Activated CD8-positive, alpha-beta T cell treated with anti-CD3 and anti-CD28 coated beads for 36 hours (primary cell): ENCODE measurements at regions of chr1 and their contacts with region 1.

Region 1: GRCh38 chr1:182855911-182856310 is 16.8 kb downstream of the DHX9 start:
- DNase-seq: no peak
- ATAC-seq: no peak
- H3K4me3 Mint-ChIP-seq: no peak overlapping the region
- H3K27ac Mint-ChIP-seq: no peak overlapping the region
- H3K4me1 Mint-ChIP-seq: peaks cover 26% of the 10 kb centered on the region
- H3K27me3 Mint-ChIP-seq: no peaks in the 10 kb centered on the region
- CTCF ChIP-seq: no peak

Region 2: DNA sequence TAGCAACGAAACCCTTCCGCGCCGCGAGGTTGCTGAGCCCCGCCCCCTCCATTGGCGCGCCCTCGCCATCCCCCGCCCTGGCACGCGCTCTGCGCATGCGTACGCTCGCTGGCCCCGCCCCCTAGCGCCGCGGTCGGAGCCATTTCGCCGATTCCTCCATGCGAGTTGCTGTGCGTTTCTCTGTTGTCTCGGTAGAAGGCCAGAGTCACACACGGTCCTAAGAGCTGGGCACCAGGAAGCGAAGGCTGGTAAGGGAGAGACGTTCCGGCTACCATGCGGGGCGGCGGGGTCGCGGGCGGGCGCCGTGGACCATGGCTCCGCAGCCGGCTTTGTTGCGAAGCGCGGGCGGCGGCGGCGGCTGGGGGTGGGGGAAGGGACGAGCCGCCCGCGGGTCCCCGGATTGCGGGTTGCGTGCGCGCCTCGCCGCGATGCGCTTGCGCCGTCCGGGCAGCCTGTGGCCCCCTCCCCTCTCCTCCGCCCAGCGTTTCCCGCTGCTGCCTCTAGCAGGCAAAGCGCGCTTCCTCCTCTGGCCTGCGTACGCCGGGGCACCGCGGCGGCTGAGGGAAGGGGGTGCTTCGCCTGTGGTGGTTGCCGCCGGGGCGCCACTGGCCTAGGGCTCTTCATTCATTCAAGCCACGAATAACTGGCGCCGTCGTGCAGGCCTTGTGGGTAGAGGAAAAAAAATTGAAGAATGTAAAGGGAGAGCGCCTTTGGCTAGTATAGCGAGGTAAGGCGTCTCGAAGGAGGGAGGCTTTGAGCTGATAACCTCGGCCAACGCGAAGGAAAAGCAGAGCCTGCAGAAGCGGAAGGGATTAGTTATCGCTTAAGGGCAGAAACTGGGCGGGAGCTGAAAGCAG is 16.5 kb before region 1 on chr1 and contains the start of gene DHX9:
- CTCF ChIA-PET with region 1: interaction called, 3 read pairs
- POLR2A ChIA-PET with region 1: interaction called, 18 read pairs
- intact Hi-C with region 1: no loop called
- DNase-seq: peak; percentile 92
- ATAC-seq: peak; percentile 87
- H3K4me3 Mint-ChIP-seq: peak within 1 kb of the TSS; percentile 87
- H3K27ac Mint-ChIP-seq: peak within 1 kb of the TSS; percentile 97
- H3K4me1 Mint-ChIP-seq: peaks cover 40% of the 10 kb centered on the region
- H3K27me3 Mint-ChIP-seq: no peaks in the 10 kb centered on the region
- CTCF ChIP-seq: no peak
- total RNA-seq, gene DHX9: 213 to 228 TPM